Dendritic cell treated with granulocyte-macrophage colony-stimulating factor and Interleukin-4, amounts not matched to agents 40 ng/mL and 50 ng/mL, for 4 days (primary cell): ENCODE measurements at regions of chr11 and their contacts with region 1.

Region 1: DNA sequence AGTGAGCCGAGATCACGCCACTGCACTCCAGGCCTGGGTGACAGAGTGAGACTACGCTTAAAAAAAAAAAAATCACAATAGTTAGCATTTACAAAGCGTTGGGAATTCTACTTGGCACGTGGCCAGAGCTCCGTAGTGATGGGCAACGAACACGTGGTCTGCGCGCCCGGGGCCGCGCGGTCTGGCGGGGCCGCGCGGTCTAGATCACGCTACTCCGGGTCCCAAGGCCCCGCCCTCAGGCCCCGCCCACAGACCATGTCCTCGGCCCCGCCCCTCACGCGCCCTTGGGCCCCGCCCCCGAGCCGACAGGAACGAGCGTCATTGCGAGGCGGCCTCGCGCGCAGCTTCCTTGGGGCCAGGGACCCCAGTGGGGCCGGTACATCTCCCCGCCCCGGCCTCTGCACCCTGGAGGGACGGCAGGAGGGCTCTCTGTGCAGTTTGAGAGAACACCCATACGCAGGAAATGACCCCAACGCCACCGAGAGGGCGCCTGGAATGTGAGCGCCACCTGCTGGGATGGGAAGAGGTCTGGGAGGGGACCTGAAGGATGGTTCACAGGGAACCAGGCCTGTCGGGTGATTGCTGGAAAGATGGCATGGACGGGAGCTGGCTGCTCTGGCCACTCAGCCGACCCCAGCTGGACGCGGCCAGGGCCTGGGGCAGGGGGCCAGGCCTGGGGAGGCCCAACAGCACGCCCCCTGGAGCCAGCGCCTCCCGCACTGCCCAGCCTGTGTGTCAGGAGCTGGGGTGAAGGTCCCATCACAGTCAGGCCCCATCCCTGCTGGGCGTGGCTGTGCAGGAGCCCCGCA is 2.0 kb upstream of the PTDSS2 start:
- H3K4me3 Mint-ChIP-seq: peak overlapping the region; percentile 94
- H3K27ac Mint-ChIP-seq: peak overlapping the region; percentile 96
- H3K4me1 Mint-ChIP-seq: peaks cover 31% of the 10 kb centered on the region
- H3K27me3 Mint-ChIP-seq: peaks cover 25% of the 10 kb centered on the region

Region 2: DNA sequence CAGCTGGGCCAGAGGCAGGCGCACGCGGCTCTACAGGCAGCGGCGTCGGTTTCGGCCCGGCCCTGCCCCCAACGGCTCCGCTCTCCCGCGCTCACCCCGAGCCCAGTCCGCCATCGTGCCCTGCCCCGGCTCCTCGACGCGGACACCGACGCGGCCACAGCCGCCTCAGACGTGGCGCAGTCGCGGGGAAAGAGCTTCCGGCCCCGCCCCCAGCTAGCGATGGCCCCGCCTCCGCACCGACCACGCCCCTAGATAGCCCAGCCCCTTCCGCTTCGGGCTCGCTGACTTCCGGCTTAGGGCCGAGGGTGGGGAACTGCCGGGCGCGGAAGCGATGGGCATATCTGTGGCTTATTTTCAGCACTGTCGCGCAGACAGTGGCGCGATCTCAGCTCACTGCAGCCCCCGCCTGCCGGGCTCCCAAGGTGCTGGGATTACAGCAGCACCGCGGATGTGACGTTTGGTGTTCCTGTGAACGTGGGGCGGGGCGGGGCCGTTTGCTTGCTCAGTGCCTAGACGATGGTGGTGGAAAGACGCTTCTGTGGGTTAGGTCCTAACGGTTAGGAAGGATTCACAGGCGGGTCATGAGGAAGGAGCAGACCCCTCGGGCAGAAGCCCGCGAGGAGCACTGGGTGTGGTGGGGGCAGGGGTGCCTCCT is 240.8 kb before region 1 on chr11 and contains the starts of genes BET1L and RIC8A:
- intact Hi-C with region 1: loop called (anchors 2 kb)
- H3K4me3 Mint-ChIP-seq: peak within 1 kb of the TSS; percentile 87
- H3K27ac Mint-ChIP-seq: peak within 1 kb of the TSS; percentile 99
- H3K4me1 Mint-ChIP-seq: peaks cover 72% of the 10 kb centered on the region
- H3K27me3 Mint-ChIP-seq: no peaks in the 10 kb centered on the region

Region 3: DNA sequence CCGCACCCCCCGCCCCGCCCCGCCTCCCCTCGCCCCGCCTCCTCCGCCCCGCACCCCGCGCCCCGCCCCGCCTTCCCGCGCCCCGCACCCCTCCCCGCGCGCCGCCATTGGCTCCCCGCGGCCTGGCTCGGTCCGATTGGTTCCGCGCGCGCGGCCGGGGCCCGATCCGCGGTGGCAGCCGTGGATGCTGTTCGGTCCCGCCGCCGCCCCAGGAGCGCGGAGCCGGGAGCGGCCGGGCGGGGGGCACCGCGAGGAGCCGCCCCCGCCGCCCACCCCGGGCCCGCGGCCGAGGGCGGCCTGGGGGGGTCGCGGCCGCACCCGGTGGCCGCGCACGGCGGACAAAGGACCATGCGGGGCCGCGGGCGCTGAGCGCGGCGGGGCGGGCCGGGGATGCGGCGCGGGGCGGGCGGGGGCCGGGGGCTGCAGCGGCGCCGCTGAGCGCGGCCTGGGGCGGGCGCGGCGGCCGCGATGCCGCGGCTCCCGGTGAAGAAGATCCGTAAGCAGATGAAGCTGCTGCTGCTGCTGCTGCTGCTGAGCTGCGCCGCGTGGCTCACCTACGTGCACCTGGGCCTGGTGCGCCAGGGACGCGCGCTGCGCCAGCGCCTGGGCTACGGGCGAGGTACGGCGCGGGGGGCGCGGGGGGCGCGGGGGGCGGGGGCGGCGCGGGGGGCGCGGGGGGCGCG is 78.7 kb before region 1 on chr11 and contains the start of gene B4GALNT4:
- intact Hi-C with region 1: no loop called
- H3K4me3 Mint-ChIP-seq: peak within 1 kb of the TSS; percentile 18
- H3K27ac Mint-ChIP-seq: no peak within 1 kb of the TSS
- H3K4me1 Mint-ChIP-seq: peaks cover 5% of the 10 kb centered on the region
- H3K27me3 Mint-ChIP-seq: peaks cover 73% of the 10 kb centered on the region

Region 4: GRCh38 chr11:406978-407739 is 41.0 kb before region 1 on chr11:
- intact Hi-C with region 1: loop called (anchors 2 kb)
- H3K4me3 Mint-ChIP-seq: peak overlapping the region; percentile 71
- H3K27ac Mint-ChIP-seq: peak overlapping the region; percentile 70
- H3K4me1 Mint-ChIP-seq: peaks cover 9% of the 10 kb centered on the region
- H3K27me3 Mint-ChIP-seq: peaks cover 2% of the 10 kb centered on the region

Region 5: GRCh38 chr11:413120-414081 is 34.7 kb before region 1 on chr11:
- intact Hi-C with region 1: loop called (anchors 2 kb)
- H3K4me3 Mint-ChIP-seq: peak overlapping the region; percentile 51
- H3K27ac Mint-ChIP-seq: peak overlapping the region; percentile 25
- H3K4me1 Mint-ChIP-seq: peaks cover 45% of the 10 kb centered on the region
- H3K27me3 Mint-ChIP-seq: peaks cover 8% of the 10 kb centered on the region

Region 6: DNA sequence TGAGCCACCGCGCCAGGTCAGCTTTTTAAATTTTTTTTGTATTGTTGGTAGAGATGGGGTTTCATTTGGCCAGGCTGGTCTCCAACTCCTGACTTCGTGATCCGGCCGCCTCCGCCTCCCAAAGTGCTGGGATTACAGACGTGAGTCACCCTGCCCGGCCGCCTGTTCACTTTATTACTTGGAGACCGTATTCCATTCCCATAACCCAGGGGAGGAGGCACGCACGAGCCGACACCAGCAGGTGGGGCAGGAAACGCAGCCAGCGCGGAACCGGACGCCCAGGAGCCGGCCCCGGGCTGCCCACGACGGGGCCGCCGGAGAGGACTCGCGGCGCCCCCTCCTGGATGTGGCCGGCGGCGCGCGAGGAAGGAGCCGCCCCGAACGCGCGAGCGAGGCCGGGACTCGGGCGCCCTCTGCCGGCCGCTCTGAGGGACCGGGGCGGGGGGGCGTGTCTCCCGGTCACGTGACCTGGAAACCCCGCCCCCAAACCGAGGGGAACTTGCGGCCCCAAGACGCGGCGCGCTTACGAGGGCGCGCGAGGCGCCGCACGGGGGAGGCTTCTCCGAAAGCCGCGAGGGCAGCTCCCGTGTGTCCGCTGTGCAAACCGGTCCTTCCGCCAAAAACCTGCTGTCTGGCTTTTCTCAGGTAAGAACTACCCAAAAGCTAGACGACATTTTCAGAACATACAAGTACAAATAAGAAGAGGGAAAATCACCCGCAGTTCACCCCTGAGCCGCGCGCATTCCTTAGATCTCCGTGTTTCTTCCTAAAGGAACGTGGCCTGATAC is 70.5 kb after region 1 on chr11:
- intact Hi-C with region 1: loop called (anchors 1 kb)
- H3K4me3 Mint-ChIP-seq: peak overlapping the region; percentile 64
- H3K27ac Mint-ChIP-seq: peak overlapping the region; percentile 69
- H3K4me1 Mint-ChIP-seq: peaks cover 37% of the 10 kb centered on the region
- H3K27me3 Mint-ChIP-seq: no peaks in the 10 kb centered on the region

Region 7: DNA sequence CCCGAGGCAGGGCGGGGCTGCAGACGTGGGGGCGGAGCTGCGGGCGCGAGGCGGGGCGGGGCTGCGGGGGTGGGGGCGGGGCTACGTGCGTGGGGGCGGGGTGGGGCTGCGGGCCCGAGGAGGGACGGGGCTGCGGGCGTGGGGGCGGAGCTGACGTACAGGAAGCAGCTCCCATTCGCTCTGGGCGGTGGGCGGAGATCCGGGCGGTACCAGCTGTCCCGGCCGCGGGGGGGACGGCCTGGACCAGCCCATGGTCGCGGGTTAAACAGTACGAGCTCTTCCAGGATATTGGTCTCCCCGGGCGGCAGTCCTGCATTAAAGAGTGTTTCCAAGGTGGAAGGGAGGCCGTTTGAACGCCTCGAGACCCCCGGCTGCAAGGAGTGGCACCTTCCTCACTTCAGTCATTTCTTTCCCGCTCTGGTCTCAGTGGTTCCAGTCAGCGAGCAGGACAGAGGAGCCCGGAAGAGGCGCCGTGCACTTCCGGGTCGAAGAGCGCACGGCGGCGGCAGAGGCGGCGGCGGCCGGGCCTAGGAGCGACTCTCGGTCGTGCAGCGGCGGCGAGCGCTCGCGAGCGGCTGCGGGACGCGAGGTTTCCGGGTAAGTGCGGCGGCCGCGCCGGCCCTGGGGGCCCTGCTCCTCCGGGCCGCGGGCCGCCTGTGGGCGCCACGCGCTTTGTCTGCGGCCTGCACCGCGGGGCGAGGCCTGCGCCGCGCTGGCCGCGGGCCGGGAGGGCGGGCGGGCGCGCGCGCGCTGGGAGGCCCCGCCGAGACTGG is 128.1 kb after region 1 on chr11 and contains the start of gene PHRF1:
- intact Hi-C with region 1: no loop called
- H3K4me3 Mint-ChIP-seq: peak within 1 kb of the TSS; percentile 96
- H3K27ac Mint-ChIP-seq: peak within 1 kb of the TSS; percentile 100
- H3K4me1 Mint-ChIP-seq: peaks cover 53% of the 10 kb centered on the region
- H3K27me3 Mint-ChIP-seq: peaks cover 34% of the 10 kb centered on the region